HepG2 (cell line): ENCODE measurements at regions of chr2 and their contacts with region 1.

Region 1: DNA sequence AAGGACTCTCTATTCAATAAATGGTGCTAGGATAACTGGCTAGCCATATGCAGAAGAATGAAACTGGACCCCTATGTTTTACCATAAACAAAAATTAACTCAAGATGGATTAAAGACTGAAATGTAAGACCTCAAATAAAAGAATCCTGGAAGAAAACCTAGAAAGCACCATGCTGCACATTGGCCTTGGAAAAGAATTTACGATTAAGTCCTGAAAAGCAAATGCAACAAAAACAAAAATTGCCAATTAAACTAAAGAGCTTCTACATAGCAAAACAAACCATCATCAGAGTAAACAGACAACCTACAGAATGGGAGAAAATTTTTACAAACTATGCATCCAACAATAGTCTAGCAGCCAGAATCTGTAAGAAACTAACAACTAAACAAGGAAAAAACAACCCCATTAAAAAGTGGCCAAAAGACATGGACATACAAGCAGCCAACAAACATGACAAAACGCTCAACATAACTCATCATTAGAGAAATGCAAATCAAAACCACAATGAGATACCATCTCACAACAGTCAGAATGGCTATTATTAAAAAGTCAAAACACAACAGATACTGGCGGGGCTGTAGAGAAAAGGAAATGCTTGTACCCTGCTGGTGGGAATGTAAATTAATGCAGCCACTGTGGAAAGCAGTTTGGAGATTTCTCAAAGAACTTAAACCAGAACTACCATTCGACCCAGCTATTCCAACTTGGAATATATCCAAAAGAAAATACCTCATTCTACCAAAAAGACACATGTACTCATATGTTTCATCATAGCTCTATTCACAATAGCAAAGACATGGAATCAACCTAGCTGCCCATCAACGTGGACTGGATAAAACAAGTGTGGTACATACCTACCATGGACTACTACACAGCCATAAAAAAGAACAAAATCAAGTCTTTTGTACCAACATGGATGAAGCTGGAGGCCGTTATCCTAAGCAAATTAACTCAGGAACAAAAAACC is 30.6 kb downstream of the SEPTIN10 start:
- DNase-seq: no peak
- ATAC-seq: no peak
- H3K4me3 ChIP-seq: no peak overlapping the region
- H3K27ac ChIP-seq: no peak overlapping the region
- H3K4me1 ChIP-seq: peaks cover 13% of the 10 kb centered on the region
- H3K27me3 ChIP-seq: no peaks in the 10 kb centered on the region
- CTCF ChIP-seq: no peak
- EP300 ChIP-seq: no peak
- POLR2A ChIP-seq: no peak
- RAD21 ChIP-seq: no peak

Region 2: GRCh38 chr2:109290887-109291643 is 292.1 kb before region 1 on chr2:
- CTCF ChIA-PET with region 1: no interaction called
- POLR2A ChIA-PET with region 1: no interaction called
- in situ Hi-C with region 1: no loop called
- intact Hi-C with region 1: no loop called
- DNase-seq: no peak
- ATAC-seq: no peak
- H3K4me3 ChIP-seq: no peak overlapping the region
- H3K27ac ChIP-seq: no peak overlapping the region
- H3K4me1 ChIP-seq: no peaks in the 10 kb centered on the region
- H3K27me3 ChIP-seq: peaks cover 2 to 4% of the 10 kb centered on the region in 2 experiments; a peak in 1 of 5 replicates
- CTCF ChIP-seq: no peak
- EP300 ChIP-seq: no peak
- POLR2A ChIP-seq: no peak
- RAD21 ChIP-seq: no peak

Region 3: DNA sequence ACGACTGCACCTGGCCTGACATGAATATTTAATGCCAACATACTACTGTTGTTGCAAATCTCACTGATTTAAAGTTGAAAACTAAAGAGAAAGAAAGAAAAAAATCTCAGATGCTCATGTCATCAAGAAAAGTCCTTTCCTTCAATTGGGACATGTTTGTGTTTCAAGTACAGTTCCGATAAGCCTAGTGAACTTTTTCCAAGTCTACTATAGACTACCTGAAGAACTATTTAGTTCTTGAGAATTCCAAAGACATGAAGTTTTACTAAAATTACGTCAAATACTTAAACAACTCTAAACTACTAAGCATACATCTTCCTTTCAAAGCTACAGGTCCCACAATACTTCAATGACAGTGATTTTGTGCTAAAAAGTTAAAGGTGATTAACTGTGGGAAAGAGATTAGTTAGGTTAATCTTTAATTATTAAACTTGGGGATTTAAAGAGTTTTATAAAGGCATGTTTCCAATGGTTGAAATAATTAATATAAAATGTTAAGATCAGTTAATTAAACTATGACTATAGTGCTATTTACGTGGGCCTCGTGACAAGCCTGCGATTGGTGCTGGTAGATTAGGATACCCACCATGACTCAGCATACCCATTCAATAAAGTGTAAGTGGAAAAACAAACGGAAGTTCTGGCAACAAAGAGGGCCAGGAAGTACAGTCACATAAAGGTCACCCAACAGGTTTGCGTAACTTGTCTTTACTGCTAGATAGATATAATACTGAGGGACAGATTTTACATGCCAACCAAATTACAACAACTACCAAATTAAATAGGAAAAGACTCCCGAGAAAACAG is 24.9 kb before region 1 on chr2:
- CTCF ChIA-PET with region 1: no interaction called
- POLR2A ChIA-PET with region 1: no interaction called
- in situ Hi-C with region 1: no loop called
- intact Hi-C with region 1: loop called (anchors 1 kb)
- DNase-seq: peak; percentile 96
- ATAC-seq: peak; percentile 82
- H3K4me3 ChIP-seq: no peak overlapping the region
- H3K27ac ChIP-seq: peak overlapping the region; percentile 71
- H3K4me1 ChIP-seq: peaks cover 40% of the 10 kb centered on the region
- H3K27me3 ChIP-seq: no peaks in the 10 kb centered on the region
- CTCF ChIP-seq: no peak
- EP300 ChIP-seq: peak; percentile 69 to 91; a peak in 3 of 4 replicates
- POLR2A ChIP-seq: no peak
- RAD21 ChIP-seq: no peak